ENCODE measurements at regions of chr17 and their contacts with region 1.

Region 1: GRCh38 chr17:36545465-36546417 is 1.0 kb downstream of the GGNBP2 start:
- DNase-seq: peak; percentile 96
- H3K4me3 Mint-ChIP-seq: peak overlapping the region; percentile 90
- H3K27ac Mint-ChIP-seq: peak overlapping the region; percentile 93
- H3K4me1 Mint-ChIP-seq: peaks cover 30% of the 10 kb centered on the region
- H3K27me3 Mint-ChIP-seq: no peaks in the 10 kb centered on the region

Region 2: GRCh38 chr17:36463916-36464315 is 81.8 kb before region 1 on chr17:
- intact Hi-C with region 1: no loop called
- DNase-seq: peak; percentile 68
- H3K4me3 Mint-ChIP-seq: no peak overlapping the region
- H3K27ac Mint-ChIP-seq: no peak overlapping the region
- H3K4me1 Mint-ChIP-seq: no peaks in the 10 kb centered on the region
- H3K27me3 Mint-ChIP-seq: peaks cover 24% of the 10 kb centered on the region

Region 3: GRCh38 chr17:36529121-36529520 is 16.6 kb before region 1 on chr17:
- intact Hi-C with region 1: no loop called
- DNase-seq: no peak
- H3K4me3 Mint-ChIP-seq: no peak overlapping the region
- H3K27ac Mint-ChIP-seq: peak overlapping the region; percentile 6
- H3K4me1 Mint-ChIP-seq: peaks cover 34% of the 10 kb centered on the region
- H3K27me3 Mint-ChIP-seq: no peaks in the 10 kb centered on the region

Region 4: GRCh38 chr17:36591434-36592315 is 45.9 kb after region 1 on chr17 and contains the start of gene DHRS11:
- intact Hi-C with region 1: loop called (anchors 2 kb)
- DNase-seq: peak; percentile 70
- H3K4me3 Mint-ChIP-seq: peak within 1 kb of the TSS; percentile 76
- H3K27ac Mint-ChIP-seq: peak within 1 kb of the TSS; percentile 28
- H3K4me1 Mint-ChIP-seq: peaks cover 26% of the 10 kb centered on the region
- H3K27me3 Mint-ChIP-seq: peaks cover 2% of the 10 kb centered on the region
- total RNA-seq, gene DHRS11: 12.3 and 12.4 TPM in 2 replicates

Region 5: DNA sequence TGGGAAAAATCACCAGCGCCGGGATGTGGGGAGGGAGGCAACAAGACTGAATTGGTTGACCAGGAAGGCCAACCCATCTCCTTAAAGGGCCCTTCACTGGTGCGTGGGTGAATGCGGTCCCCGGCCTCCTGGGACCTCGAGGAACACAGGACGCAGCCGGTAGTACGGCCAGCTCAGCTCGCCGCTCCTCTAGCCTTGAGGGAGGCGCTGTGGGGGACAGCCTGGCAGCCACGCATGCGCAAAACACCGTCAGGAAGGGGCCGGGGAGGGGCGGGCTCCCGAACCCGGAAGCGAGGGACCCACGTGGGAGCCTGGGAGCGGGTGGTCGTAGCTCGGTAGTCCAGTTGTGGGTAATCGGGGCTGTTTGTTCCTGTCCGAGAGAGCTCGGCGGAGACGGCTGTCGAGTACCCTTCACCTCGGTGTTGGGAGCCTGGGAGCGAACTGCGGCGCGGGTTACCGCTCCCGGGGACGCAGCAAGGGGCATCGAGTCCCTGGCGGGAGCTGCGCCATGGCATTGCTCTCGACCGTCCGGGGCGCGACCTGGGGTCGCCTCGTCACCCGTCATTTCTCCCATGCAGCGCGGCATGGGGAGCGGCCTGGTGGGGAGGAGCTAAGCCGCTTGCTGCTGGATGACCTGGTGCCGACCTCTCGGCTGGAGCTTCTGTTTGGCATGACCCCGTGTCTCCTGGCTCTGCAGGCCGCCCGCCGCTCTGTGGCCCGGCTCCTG is 55.7 kb after region 1 on chr17 and contains the start of gene MRM1:
- intact Hi-C with region 1: loop called (anchors 2 kb)
- DNase-seq: peak; percentile 84
- H3K4me3 Mint-ChIP-seq: peak within 1 kb of the TSS; percentile 89
- H3K27ac Mint-ChIP-seq: peak within 1 kb of the TSS; percentile 78
- H3K4me1 Mint-ChIP-seq: peaks cover 27% of the 10 kb centered on the region
- H3K27me3 Mint-ChIP-seq: no peaks in the 10 kb centered on the region
- total RNA-seq, gene MRM1: 23.2 TPM in 2 replicates